ENCODE measurements at regions of chr11 and their contacts with region 1.

Region 1: GRCh38 chr11:76807206-76807875 is 24.2 kb downstream of the TSKU start:
- DNase-seq: peak; percentile 76 to 89
- ATAC-seq: peak; percentile 54 to 74
- H3K4me3 ChIP-seq: no peak overlapping the region
- H3K27ac ChIP-seq: peak overlapping the region; percentile 66 to 98
- H3K4me1 ChIP-seq: peaks cover 53% of the 10 kb centered on the region
- CTCF ChIP-seq: peak; percentile 86
- EP300 ChIP-seq: no peak
- POLR2A ChIP-seq: no peak
- RAD21 ChIP-seq: peak; percentile 66 to 73

Region 2: DNA sequence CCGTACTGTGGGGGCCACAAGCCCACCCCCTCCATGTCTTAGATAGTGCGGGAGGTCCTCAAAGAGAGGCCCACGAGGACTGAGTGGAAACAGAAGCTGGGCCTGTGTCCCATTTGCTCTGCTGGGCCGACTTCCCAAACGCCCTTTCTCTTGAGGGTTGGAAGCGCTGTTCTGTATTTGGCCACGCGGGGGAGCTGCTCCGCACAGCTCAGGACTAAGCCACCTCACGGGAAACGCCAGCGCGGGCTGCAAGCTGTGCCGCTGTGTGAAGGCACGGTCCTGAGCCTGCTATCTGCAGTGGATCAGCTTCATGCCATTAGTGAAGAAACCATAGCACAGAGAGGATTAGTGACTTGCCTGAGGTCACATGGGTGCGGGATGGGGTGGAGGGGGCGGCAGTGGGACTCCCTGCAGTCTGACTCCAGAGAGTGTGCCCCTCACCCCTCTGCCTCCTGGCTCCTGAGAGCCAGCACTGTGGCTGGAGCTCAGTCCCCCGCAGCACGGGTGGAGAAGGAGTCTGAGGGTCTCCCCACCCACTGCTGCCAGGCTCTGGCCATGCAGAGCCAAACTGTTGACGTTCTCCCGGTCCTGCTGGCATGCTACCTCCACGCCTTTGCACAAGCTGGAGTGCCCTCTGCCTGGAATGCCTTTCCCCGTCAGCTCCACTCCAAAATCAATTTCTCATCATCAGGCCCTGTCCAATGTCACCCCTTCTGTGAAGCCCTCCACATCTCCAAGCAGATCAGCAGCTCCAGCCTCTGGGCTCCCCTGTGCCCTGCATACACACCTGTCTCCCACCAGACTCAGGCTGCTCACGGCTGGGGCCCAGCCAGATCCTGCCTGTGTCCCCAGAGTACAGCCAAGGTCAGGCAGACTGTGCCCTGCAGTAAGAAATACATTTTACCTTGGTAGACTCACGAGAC is 85.3 kb before region 1 on chr11:
- CTCF ChIA-PET with region 1: interaction called, 68 read pairs
- POLR2A ChIA-PET with region 1: no interaction called
- DNase-seq: peak; percentile 67 to 80
- ATAC-seq: peak; percentile 91 to 97
- H3K4me3 ChIP-seq: no peak overlapping the region
- H3K27ac ChIP-seq: peak overlapping the region in 1 of 2 experiments; percentile 61; a peak in 3 of 6 replicates
- H3K4me1 ChIP-seq: 0 out of 3 replicates have a peak, but pooled peaks cover 4% of the 10 kb centered on the region
- CTCF ChIP-seq: peak; percentile 83
- EP300 ChIP-seq: no peak
- POLR2A ChIP-seq: no peak
- RAD21 ChIP-seq: peak; percentile 68

Region 3: GRCh38 chr11:76729214-76729613 is 78.1 kb before region 1 on chr11:
- CTCF ChIA-PET with region 1: interaction called, 207 read pairs
- POLR2A ChIA-PET with region 1: interaction called, 3 read pairs
- DNase-seq: no peak
- ATAC-seq: no peak
- H3K4me3 ChIP-seq: no peak overlapping the region
- H3K27ac ChIP-seq: no peak overlapping the region
- H3K4me1 ChIP-seq: peaks cover 3% of the 10 kb centered on the region
- CTCF ChIP-seq: no peak
- EP300 ChIP-seq: no peak
- POLR2A ChIP-seq: no peak
- RAD21 ChIP-seq: no peak

Region 4: GRCh38 chr11:76734456-76735420 is 72.6 kb before region 1 on chr11:
- CTCF ChIA-PET with region 1: interaction called, 207 read pairs
- POLR2A ChIA-PET with region 1: no interaction called
- DNase-seq: no peak
- ATAC-seq: peak in 1 of 2 experiments; percentile 6; a peak in 2 of 6 replicates
- H3K4me3 ChIP-seq: no peak overlapping the region
- H3K27ac ChIP-seq: peak overlapping the region; percentile 77 to 79
- H3K4me1 ChIP-seq: peaks cover 24% of the 10 kb centered on the region
- CTCF ChIP-seq: no peak
- EP300 ChIP-seq: no peak
- POLR2A ChIP-seq: no peak
- RAD21 ChIP-seq: no peak

Region 5: GRCh38 chr11:76823481-76824078 is 16.2 kb after region 1 on chr11:
- CTCF ChIA-PET with region 1: interaction called, 17 read pairs
- POLR2A ChIA-PET with region 1: interaction called, 5 read pairs
- DNase-seq: peak; percentile 89 to 91
- ATAC-seq: peak; percentile 95 to 97
- H3K4me3 ChIP-seq: peak overlapping the region; percentile 37
- H3K27ac ChIP-seq: peak overlapping the region; percentile 80 to 91
- H3K4me1 ChIP-seq: peaks cover 27% of the 10 kb centered on the region
- CTCF ChIP-seq: no peak
- EP300 ChIP-seq: no peak
- POLR2A ChIP-seq: no peak; the same call in 1 of the 2 replicates
- RAD21 ChIP-seq: no peak

Region 6: DNA sequence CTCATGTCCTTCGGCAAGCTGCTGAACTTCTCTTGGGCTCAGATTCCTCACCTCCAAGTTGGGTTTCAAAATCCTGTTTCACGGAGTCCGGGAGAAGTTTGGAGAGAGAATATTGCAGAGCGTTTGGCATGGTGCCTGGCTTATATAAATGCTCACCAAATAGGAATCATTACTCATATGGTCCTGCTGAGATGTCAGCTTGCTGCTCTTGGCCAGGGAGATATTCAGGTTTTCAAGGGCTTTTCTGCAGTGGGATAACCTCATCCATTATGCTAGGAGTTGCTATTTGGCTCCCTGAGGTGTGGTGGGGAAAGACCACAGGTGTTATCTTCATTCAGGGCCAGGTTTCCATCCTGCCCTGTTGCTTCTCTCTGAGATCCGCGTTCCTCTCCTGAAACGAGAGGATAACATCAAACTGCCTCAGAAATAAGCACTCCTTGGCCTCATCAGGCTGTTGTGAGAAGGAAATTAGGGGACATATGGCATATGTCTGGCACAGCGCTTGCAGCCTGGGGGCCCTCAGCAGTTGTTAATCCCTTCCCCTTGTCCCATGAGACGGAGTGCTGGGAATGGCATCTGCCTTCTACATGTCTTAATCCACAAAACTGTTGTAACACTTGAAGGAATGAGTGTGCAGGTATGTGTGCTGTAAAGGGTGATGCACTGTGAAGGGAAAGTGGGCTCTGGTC is 23.4 kb after region 1 on chr11:
- CTCF ChIA-PET with region 1: interaction called, 10 read pairs
- POLR2A ChIA-PET with region 1: no interaction called
- DNase-seq: no peak
- ATAC-seq: no peak; a peak in 2 of 6 replicates
- H3K4me3 ChIP-seq: no peak overlapping the region
- H3K27ac ChIP-seq: no peak overlapping the region
- H3K4me1 ChIP-seq: peaks cover 3% of the 10 kb centered on the region; the same call in 2 of the 3 replicates
- CTCF ChIP-seq: no peak
- EP300 ChIP-seq: no peak
- POLR2A ChIP-seq: no peak
- RAD21 ChIP-seq: no peak

Region 7: GRCh38 chr11:76835928-76836612 is 28.7 kb after region 1 on chr11:
- CTCF ChIA-PET with region 1: interaction called, 18 read pairs
- POLR2A ChIA-PET with region 1: no interaction called
- DNase-seq: peak in 1 of 2 experiments; percentile 64
- ATAC-seq: peak; percentile 9 to 73; a peak in 3 of 6 replicates
- H3K4me3 ChIP-seq: no peak overlapping the region
- H3K27ac ChIP-seq: peak overlapping the region; percentile 14 to 39; a peak in 2 of 6 replicates
- H3K4me1 ChIP-seq: peaks cover 39% of the 10 kb centered on the region
- CTCF ChIP-seq: no peak
- EP300 ChIP-seq: no peak
- POLR2A ChIP-seq: no peak
- RAD21 ChIP-seq: no peak